Heart left ventricle (tissue), 16 donors: ENCODE measurements at regions of chr5 and their contacts with region 1.

Region 1: GRCh38 chr5:165209086-165209727 is 1703.8 kb downstream of the MAT2B start:
- DNase-seq: no peak
- ATAC-seq: no peak
- H3K4me3 ChIP-seq: no peak overlapping the region
- H3K27ac ChIP-seq: no peak overlapping the region
- H3K4me1 ChIP-seq: no peaks in the 10 kb centered on the region
- H3K27me3 ChIP-seq: no peaks in the 10 kb centered on the region
- CTCF ChIP-seq: peak; percentile 32 to 70 (median 56)
- POLR2A ChIP-seq: no peak

Region 2: GRCh38 chr5:163564321-163564938 is 1644.8 kb before region 1 on chr5:
- intact Hi-C with region 1: loop called in 7 of 10 experiments (anchors 5 to 10 kb)
- DNase-seq: peak in 1 of 5 donors; percentile 32
- ATAC-seq: peak in 1 of 4 donors; percentile 67
- H3K4me3 ChIP-seq: no peak overlapping the region
- H3K27ac ChIP-seq: no peak overlapping the region
- H3K4me1 ChIP-seq: peaks cover 0 to 19% (median 8%) of the 10 kb centered on the region in 12 donors
- H3K27me3 ChIP-seq: peaks cover 0 to 32% (median 3%) of the 10 kb centered on the region in 9 donors
- CTCF ChIP-seq: peak; percentile 81 to 95 (median 88)
- POLR2A ChIP-seq: no peak

Region 3: DNA sequence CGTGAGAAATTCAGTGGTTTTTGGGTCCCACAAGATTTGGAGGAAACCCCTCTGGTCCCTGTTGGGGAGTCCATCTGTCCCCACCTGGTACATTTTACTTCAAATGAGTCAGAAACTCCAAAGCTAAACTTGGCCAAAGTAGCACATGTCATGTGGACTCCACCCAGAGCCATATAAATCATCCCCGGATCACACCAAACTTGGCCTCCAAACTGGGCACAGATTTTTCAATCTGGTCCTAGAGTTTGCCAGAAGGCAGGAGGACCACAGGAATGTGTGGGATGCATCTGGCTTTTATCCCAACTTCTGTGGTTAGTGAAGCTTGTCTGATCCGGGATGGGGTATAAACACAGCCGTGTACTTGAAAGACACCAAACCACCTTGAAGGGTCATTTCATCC is 1637.5 kb before region 1 on chr5:
- intact Hi-C with region 1: loop called in 8 of 10 experiments (anchors 10 kb)
- DNase-seq: peak in 2 of 5 donors; percentile 17 to 18
- ATAC-seq: peak in 2 of 4 donors; percentile 32 to 60
- H3K4me3 ChIP-seq: no peak overlapping the region
- H3K27ac ChIP-seq: no peak overlapping the region
- H3K4me1 ChIP-seq: peaks cover 0 to 1% (median 0%) of the 10 kb centered on the region in 12 donors
- H3K27me3 ChIP-seq: peaks cover 0 to 10% (median 0%) of the 10 kb centered on the region in 9 donors
- CTCF ChIP-seq: no peak
- POLR2A ChIP-seq: no peak

Region 4: DNA sequence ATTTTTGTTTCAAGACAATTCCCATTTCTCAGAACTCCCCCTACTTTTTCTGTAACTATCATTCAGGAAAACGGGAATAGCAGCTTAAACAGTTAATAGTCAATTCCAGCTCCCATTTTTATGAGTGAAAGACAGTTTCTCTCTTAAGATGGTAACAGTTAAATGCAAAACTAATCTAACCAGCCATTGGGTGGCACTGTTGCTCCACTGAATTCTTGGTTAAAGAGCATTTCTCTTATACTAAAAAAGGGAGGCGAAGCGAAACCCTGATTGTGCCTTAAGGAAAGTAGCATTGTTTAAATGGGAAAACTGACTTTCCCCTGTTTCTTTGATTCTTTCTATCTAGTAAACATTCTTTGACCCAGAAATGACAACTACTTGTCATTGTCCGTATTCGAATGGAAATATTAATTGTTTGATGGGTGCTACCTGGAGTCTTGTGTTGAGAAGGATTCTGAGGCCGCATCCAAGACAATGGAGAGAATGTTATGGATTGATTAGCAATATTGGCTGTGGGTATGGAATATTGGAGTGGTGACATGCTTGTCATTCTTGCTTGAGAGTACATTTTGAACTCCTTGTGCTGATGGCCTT is 1196.0 kb before region 1 on chr5:
- intact Hi-C with region 1: loop called in 8 of 10 experiments (anchors 5 to 10 kb)
- DNase-seq: peak in 3 of 5 donors; percentile 18 to 29 (median 27)
- ATAC-seq: no peak
- H3K4me3 ChIP-seq: no peak overlapping the region
- H3K27ac ChIP-seq: no peak overlapping the region
- H3K4me1 ChIP-seq: no peaks in the 10 kb centered on the region
- H3K27me3 ChIP-seq: peaks cover 0 to 2% (median 0%) of the 10 kb centered on the region in 9 donors
- CTCF ChIP-seq: peak; percentile 47 to 72 (median 60)
- POLR2A ChIP-seq: no peak